ENCODE measurements at regions of chr2 and their contacts with region 1.

Region 1: GRCh38 chr2:10269711-10270610 is 32.7 kb upstream of the HPCAL1 start:
- DNase-seq: peak; percentile 79
- ATAC-seq: peak; percentile 68
- H3K4me3 ChIP-seq: no peak overlapping the region
- H3K27ac ChIP-seq: peak overlapping the region; percentile 73
- H3K4me1 ChIP-seq: peaks cover 14% of the 10 kb centered on the region
- H3K27me3 ChIP-seq: no peaks in the 10 kb centered on the region
- CTCF ChIP-seq: no peak

Region 2: GRCh38 chr2:10408649-10409579 is 139.0 kb after region 1 on chr2:
- intact Hi-C with region 1: loop called (anchors 5 kb)
- DNase-seq: peak; percentile 92
- ATAC-seq: peak; percentile 86
- H3K4me3 ChIP-seq: no peak overlapping the region
- H3K27ac ChIP-seq: peak overlapping the region; percentile 82
- H3K4me1 ChIP-seq: peaks cover 57% of the 10 kb centered on the region
- H3K27me3 ChIP-seq: no peaks in the 10 kb centered on the region
- CTCF ChIP-seq: peak; percentile 96

Measured in upper lobe of right lung (tissue), 1 donor.